ENCODE measurements at regions of chr16 and their contacts with region 1.

Region 1: GRCh38 chr16:15822957-15823356 is 33.9 kb downstream of the MYH11 start:
- DNase-seq: no peak
- H3K4me3 ChIP-seq: no peak overlapping the region
- H3K27ac ChIP-seq: no peak overlapping the region
- H3K4me1 ChIP-seq: no peaks in the 10 kb centered on the region
- H3K27me3 ChIP-seq: no peaks in the 10 kb centered on the region

Region 2: GRCh38 chr16:15770512-15770911 is 52.4 kb before region 1 on chr16:
- CTCF ChIA-PET with region 1: interaction called, 10 read pairs
- POLR2A ChIA-PET with region 1: interaction called, 3 read pairs
- DNase-seq: no peak
- H3K4me3 ChIP-seq: no peak overlapping the region
- H3K27ac ChIP-seq: no peak overlapping the region
- H3K4me1 ChIP-seq: peaks cover 0 to 2% (median 0%) of the 10 kb centered on the region in 4 experiments
- H3K27me3 ChIP-seq: no peaks in the 10 kb centered on the region

Region 3: GRCh38 chr16:15777533-15778203 is 45.3 kb before region 1 on chr16:
- CTCF ChIA-PET with region 1: interaction called, 60 read pairs
- POLR2A ChIA-PET with region 1: no interaction called
- DNase-seq: peak; percentile 76 to 83 (median 82)
- H3K4me3 ChIP-seq: no peak overlapping the region
- H3K27ac ChIP-seq: no peak overlapping the region
- H3K4me1 ChIP-seq: peaks cover 0 to 3% (median 0%) of the 10 kb centered on the region in 4 experiments
- H3K27me3 ChIP-seq: no peaks in the 10 kb centered on the region

Region 4: DNA sequence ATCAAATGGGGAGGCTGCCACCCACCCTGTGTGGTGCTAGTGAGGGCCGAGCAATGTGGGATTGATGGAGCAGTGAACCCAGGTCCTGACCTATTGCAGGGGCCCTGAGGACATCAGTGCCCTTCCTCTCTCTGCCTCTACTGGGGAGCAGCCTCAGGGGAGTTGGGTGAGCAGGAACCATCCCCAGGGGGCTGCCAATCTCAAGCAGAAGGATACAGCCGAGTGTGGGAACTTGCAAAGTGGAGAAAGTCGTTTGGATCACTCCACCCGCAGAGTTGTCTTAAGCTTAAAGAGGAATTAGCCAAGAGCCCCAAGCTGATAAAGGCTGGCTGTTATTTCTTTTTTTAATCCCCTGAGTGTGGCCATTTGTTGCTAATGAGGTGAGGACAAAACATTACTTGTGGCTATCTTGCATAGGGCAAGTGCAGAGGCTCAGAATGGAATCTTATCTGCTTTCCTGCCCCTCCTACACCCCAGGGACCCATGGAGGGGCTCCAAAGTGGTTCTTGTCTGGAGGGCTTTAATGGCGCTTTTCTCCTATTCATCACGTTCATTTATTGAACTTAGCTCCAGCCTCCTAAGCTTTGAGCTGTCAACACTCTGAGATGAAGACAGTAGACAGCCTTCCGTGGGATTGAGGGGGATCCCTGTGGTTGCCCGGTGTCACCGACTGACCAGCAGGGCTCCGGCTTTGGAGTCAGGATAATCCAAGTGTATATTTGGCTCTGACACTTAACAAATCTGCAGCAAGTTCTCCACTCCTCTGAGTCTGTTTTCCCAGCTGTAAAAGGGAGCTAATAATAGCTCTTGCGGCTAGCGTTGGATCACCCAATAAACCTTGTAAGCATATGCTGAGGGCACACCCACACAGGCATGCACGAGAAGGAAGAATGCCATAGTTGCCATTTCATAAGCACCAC is 11.2 kb before region 1 on chr16:
- CTCF ChIA-PET with region 1: interaction called, 14 read pairs
- POLR2A ChIA-PET with region 1: no interaction called
- DNase-seq: peak in 2 of 3 donors; percentile 34 to 67
- H3K4me3 ChIP-seq: no peak overlapping the region
- H3K27ac ChIP-seq: no peak overlapping the region
- H3K4me1 ChIP-seq: peaks cover 3 to 28% (median 11%) of the 10 kb centered on the region in 4 experiments
- H3K27me3 ChIP-seq: no peaks in the 10 kb centered on the region

Region 5: DNA sequence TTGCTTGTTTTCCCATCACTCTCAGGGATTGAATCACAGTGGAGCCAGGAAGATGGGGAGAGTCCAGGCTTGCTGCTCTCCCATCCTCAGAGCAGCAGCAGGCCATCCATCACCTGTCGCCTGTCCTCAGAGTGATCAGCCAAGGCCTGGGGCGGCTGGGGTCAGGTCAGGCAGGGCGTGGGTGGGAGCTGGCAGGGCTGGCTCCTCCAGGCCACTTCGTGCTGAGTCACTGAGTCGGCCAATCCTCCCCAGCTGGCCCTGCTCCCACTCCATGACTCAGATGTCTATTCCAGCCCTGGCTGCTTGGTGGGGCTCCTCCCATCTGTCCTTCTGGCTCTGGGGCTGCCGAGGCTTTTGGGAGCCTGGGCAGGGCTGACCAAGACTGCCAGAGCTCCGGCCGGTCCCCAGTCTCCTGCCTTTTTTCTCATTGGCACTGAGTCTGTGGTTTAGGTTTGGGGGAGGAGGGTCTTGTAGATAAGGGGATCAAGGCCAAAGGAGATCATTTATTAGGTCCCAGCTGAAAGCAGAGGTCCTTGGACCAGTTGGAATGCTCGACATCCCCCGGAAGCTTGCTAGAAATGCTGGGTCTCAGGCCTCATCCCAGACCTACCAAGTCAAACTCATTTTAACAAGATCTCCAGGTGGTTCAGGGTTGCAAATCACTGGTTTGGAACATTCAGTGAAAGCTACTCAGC is 199.2 kb after region 1 on chr16:
- CTCF ChIA-PET with region 1: no interaction called
- POLR2A ChIA-PET with region 1: no interaction called
- DNase-seq: peak; percentile 55 to 89 (median 88)
- H3K4me3 ChIP-seq: peak overlapping the region in 3 of 7 experiments; percentile 0 to 48 (median 2)
- H3K27ac ChIP-seq: peak overlapping the region; percentile 55 to 85
- H3K4me1 ChIP-seq: peaks cover 5 to 47% (median 34%) of the 10 kb centered on the region in 4 experiments
- H3K27me3 ChIP-seq: no peaks in the 10 kb centered on the region